ENCODE measurements at regions of chr1 and their contacts with region 1.

Region 1: GRCh38 chr1:32773018-32773763 is 44.0 kb downstream of the YARS1 start:
- DNase-seq: peak; percentile 78 to 93 (median 90)
- ATAC-seq: peak; percentile 80 to 90 (median 86)
- H3K4me3 ChIP-seq: no peak overlapping the region
- H3K27ac ChIP-seq: peak overlapping the region in 1 of 4 donors; percentile 44
- H3K4me1 ChIP-seq: peaks cover 0 to 6% (median 0%) of the 10 kb centered on the region in 3 donors
- H3K27me3 ChIP-seq: no peaks in the 10 kb centered on the region
- CTCF ChIP-seq: peak; percentile 84 to 91 (median 86)

Region 2: GRCh38 chr1:32533792-32534327 is 239.3 kb before region 1 on chr1:
- intact Hi-C with region 1: no loop called
- DNase-seq: no peak
- ATAC-seq: no peak
- H3K4me3 ChIP-seq: no peak overlapping the region
- H3K27ac ChIP-seq: no peak overlapping the region
- H3K4me1 ChIP-seq: peaks cover 0 to 3% (median 0%) of the 10 kb centered on the region in 3 donors
- H3K27me3 ChIP-seq: no peaks in the 10 kb centered on the region
- CTCF ChIP-seq: no peak

Region 3: GRCh38 chr1:32714277-32714676 is 58.9 kb before region 1 on chr1:
- intact Hi-C with region 1: loop called in 2 of 3 experiments (anchors 5 kb)
- DNase-seq: no peak
- ATAC-seq: no peak
- H3K4me3 ChIP-seq: no peak overlapping the region
- H3K27ac ChIP-seq: no peak overlapping the region
- H3K4me1 ChIP-seq: peaks cover 3 to 10% (median 8%) of the 10 kb centered on the region in 3 donors
- H3K27me3 ChIP-seq: no peaks in the 10 kb centered on the region
- CTCF ChIP-seq: no peak

Region 4: DNA sequence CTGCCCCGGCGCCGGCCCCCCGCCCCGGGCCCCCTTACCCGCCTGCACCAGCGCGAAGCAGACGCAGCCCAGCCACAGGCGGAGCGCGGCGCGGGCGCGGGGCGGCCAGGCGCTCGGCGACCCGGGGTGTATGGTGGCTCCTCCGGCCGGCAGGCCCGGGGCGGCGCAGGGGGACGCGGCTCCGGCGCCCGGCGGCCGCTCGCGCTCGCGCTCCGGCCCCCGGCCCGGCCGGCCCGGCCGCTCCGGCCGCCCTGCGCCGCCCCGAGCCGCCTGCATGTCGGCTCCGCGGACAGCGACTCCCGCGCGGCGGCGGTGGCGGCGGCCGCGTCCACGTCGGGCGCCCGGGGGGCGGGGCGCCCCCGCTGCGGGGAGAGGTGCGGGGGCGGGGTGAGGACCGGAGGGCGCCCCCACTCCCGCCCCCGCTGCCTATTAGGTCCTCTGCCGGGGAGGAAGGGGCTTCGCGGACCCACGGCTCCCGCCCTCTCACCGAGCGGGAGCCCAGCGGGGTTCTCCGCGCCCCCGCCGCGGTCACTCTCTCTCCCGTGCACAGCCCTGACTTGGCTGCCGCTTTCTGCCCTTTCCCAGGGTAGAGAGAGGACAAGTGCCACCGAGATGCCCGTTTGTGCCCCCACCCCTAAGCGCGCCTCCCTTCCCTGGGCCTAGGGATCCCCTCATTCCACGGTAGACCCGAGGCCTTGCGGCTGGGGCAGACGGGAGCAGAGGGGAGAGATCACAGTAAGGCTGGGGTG is 97.6 kb after region 1 on chr1 and contains the start of gene FNDC5:
- intact Hi-C with region 1: loop called in 1 of 3 experiments (anchors 10 kb)
- DNase-seq: peak in 4 of 6 donors; percentile 15 to 78 (median 42)
- ATAC-seq: peak; percentile 63 to 85 (median 76)
- H3K4me3 ChIP-seq: peak within 1 kb of the TSS in 3 of 4 donors; percentile 16 to 48 (median 40)
- H3K27ac ChIP-seq: no peak within 1 kb of the TSS
- H3K4me1 ChIP-seq: no peaks in the 10 kb centered on the region
- H3K27me3 ChIP-seq: no peaks in the 10 kb centered on the region
- CTCF ChIP-seq: no peak
- total RNA-seq, gene FNDC5: 0.28 to 0.89 (median 0.59) TPM